ENCODE measurements at regions of chr7 and their contacts with region 1.

Region 1: GRCh38 chr7:139340037-139340807 is 915 bp upstream of the FMC1 start:
- DNase-seq: peak; percentile 100
- H3K4me3 ChIP-seq: peak overlapping the region; percentile 83 to 100 (median 98)
- H3K27ac ChIP-seq: peak overlapping the region; percentile 97 to 99
- H3K4me1 ChIP-seq: peaks cover 5 to 15% (median 11%) of the 10 kb centered on the region in 4 experiments
- H3K27me3 ChIP-seq: no peaks in the 10 kb centered on the region

Region 2: GRCh38 chr7:139139150-139139549 is 201.1 kb before region 1 on chr7:
- CTCF ChIA-PET with region 1: no interaction called
- POLR2A ChIA-PET with region 1: no interaction called
- DNase-seq: no peak
- H3K4me3 ChIP-seq: no peak overlapping the region
- H3K27ac ChIP-seq: no peak overlapping the region
- H3K4me1 ChIP-seq: peaks cover 0 to 3% (median 1%) of the 10 kb centered on the region in 4 experiments
- H3K27me3 ChIP-seq: no peaks in the 10 kb centered on the region

Region 3: DNA sequence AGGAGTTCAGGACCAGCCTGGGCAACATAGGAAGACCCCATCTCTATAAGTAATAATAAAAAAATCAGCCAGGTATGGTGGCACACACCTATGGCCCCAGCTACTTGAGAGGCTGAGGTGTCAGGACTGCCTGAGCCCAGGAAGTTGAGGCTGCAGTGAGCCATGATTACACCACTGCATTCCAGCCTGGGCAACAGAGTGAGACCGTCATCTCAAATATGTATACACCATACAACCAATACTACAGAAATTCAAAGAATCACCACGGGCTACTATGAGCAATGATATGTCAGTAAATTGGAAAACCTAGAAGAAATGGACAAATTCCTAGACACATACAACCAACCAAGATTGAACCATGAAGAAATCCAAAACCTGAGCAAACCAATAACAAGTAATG is 170.4 kb before region 1 on chr7:
- CTCF ChIA-PET with region 1: no interaction called
- POLR2A ChIA-PET with region 1: no interaction called
- DNase-seq: no peak
- H3K4me3 ChIP-seq: no peak overlapping the region
- H3K27ac ChIP-seq: no peak overlapping the region
- H3K4me1 ChIP-seq: no peaks in the 10 kb centered on the region
- H3K27me3 ChIP-seq: no peaks in the 10 kb centered on the region

Region 4: DNA sequence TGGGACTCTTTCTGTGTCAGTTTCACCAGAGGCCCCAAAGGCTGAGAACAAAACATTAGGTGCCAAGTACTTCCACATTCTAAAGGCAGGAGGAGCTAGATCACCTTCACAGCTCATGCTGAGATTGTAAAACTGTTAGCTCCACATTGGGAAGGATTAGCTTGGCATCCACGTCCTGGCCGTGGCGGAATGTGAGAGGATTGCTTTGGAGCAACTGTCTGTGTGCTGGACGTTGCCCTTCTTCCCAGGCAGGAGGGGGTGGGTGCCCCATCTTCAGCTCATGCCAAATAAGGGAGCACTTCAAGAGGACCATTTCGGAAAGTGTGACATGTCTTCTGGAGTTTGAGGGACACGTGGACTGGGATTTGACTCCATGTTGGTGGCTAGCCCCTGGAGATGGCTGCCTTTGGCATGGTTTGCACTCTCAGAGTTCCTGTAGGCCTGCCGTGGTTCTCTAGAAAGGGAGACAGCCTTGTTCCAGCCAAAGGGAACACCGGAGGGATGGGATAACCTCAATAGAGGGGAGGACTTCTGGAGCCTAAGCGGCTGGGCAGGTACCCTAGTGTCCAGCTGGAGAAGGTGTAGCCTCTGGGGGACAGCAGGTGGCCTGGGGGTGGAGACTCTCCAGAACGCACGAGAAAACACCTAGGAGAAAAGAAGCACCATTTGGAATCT is 19.0 kb before region 1 on chr7:
- CTCF ChIA-PET with region 1: interaction called, 22 read pairs
- POLR2A ChIA-PET with region 1: no interaction called
- DNase-seq: peak; percentile 32 to 45 (median 42)
- H3K4me3 ChIP-seq: no peak overlapping the region
- H3K27ac ChIP-seq: no peak overlapping the region
- H3K4me1 ChIP-seq: peaks cover 0 to 3% (median 0%) of the 10 kb centered on the region in 4 experiments
- H3K27me3 ChIP-seq: no peaks in the 10 kb centered on the region

Region 5: GRCh38 chr7:139359366-139360209 is 19.4 kb after region 1 on chr7 and contains the start of gene LUC7L2:
- CTCF ChIA-PET with region 1: interaction called, 14 read pairs
- POLR2A ChIA-PET with region 1: interaction called, 15 read pairs
- DNase-seq: peak; percentile 99
- H3K4me3 ChIP-seq: peak within 1 kb of the TSS; percentile 78 to 97 (median 91)
- H3K27ac ChIP-seq: peak within 1 kb of the TSS; percentile 97 to 98
- H3K4me1 ChIP-seq: peaks cover 11 to 33% (median 20%) of the 10 kb centered on the region in 4 experiments
- H3K27me3 ChIP-seq: no peaks in the 10 kb centered on the region

Region 6: GRCh38 chr7:139403601-139404000 is 63.4 kb after region 1 on chr7:
- CTCF ChIA-PET with region 1: no interaction called
- POLR2A ChIA-PET with region 1: no interaction called
- DNase-seq: no peak
- H3K4me3 ChIP-seq: no peak overlapping the region
- H3K27ac ChIP-seq: no peak overlapping the region
- H3K4me1 ChIP-seq: no peaks in the 10 kb centered on the region
- H3K27me3 ChIP-seq: no peaks in the 10 kb centered on the region

Region 7: DNA sequence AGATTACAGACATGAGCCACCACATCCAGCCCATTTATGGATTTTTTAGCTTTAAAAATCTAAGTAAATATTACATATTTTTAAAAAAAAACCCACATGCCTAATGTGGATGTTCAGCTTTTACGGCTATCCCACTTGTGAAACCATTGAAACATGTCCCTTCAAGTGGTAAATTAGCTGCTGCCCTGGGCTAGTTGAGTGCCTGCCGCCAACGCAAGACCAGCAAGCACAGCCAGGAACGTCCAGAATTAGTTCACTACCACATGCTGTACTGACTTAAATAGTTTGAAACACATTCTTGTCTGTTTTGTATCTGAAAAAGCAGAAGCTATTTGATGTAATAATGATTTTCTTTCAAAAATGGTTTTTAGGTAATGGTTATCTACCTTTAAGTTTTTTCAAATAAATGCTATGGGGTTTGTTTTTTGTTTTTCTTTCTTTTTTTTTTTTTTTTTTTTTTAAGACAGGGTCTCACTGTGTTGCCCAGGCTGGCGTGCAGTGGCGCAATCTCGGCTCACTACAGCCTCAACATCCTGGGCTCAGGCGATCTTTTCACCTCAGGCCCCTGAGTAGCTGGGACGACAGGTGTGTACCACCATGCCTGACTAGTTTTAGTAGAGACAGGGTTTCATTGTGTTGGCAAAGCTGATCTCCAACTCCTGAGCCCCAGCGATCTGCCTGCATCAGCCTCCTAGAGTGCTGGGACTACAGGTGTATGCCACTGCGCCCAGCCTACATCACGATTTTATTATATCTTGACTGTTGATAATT is 86.2 kb after region 1 on chr7:
- CTCF ChIA-PET with region 1: no interaction called
- POLR2A ChIA-PET with region 1: no interaction called
- DNase-seq: no peak
- H3K4me3 ChIP-seq: no peak overlapping the region
- H3K27ac ChIP-seq: no peak overlapping the region
- H3K4me1 ChIP-seq: no peaks in the 10 kb centered on the region
- H3K27me3 ChIP-seq: no peaks in the 10 kb centered on the region